ENCODE measurements at regions of chr1 and their contacts with region 1.

Region 1: GRCh38 chr1:40951943-40952743 is 27.4 kb upstream of the CTPS1 start:
- DNase-seq: peak; percentile 64
- ATAC-seq: peak; percentile 41
- H3K4me3 ChIP-seq: no peak overlapping the region
- H3K4me3 Mint-ChIP-seq: no peak overlapping the region
- H3K27ac ChIP-seq: no peak overlapping the region
- H3K27ac Mint-ChIP-seq: no peak overlapping the region
- H3K4me1 ChIP-seq: peaks cover 5 to 6% of the 10 kb centered on the region in 2 donors
- H3K4me1 Mint-ChIP-seq: peaks cover 4% of the 10 kb centered on the region
- H3K27me3 ChIP-seq: peaks cover 0 to 27% (median 11%) of the 10 kb centered on the region in 4 experiments
- H3K27me3 Mint-ChIP-seq: peaks cover 43% of the 10 kb centered on the region
- CTCF ChIP-seq: peak; percentile 85

Region 2: GRCh38 chr1:40592107-40592803 is 359.9 kb before region 1 on chr1:
- CTCF ChIA-PET with region 1: interaction called, 8 read pairs
- POLR2A ChIA-PET with region 1: no interaction called
- intact Hi-C with region 1: loop called (anchors 2 kb)
- DNase-seq: peak; percentile 40
- ATAC-seq: no peak
- H3K4me3 ChIP-seq: no peak overlapping the region
- H3K4me3 Mint-ChIP-seq: no peak overlapping the region
- H3K27ac ChIP-seq: no peak overlapping the region
- H3K27ac Mint-ChIP-seq: no peak overlapping the region
- H3K4me1 ChIP-seq: no peaks in the 10 kb centered on the region
- H3K4me1 Mint-ChIP-seq: peaks cover 4% of the 10 kb centered on the region
- H3K27me3 ChIP-seq: peaks cover 0 to 2% (median 0%) of the 10 kb centered on the region in 4 experiments
- H3K27me3 Mint-ChIP-seq: peaks cover 14% of the 10 kb centered on the region
- CTCF ChIP-seq: peak; percentile 39

Region 3: DNA sequence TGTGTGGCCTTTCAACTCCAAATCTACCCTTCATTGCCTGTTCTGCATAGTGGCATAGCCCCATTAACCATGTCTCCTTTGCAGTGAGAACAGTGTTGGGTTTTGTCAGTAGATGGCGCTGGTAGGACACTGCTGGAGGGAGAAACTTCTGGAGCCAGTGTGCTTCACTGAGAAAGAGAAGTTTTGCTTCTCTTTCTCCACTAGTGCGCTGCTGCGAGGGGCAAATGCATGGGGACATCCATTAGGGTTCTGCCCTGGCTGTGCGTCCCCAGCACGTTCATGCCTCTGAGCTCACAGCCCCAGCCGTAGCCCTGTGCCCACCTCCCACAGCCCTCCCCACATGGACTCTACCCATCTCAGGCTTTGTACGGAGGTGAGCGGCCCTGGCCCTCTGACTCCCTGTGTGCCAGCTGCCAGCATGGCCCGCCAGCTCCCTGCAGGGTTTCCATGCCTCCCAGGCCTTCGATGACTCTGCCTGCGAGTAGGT is 339.8 kb before region 1 on chr1:
- CTCF ChIA-PET with region 1: interaction called, 7 read pairs
- POLR2A ChIA-PET with region 1: no interaction called
- intact Hi-C with region 1: loop called (anchors 1 kb)
- DNase-seq: peak; percentile 81
- ATAC-seq: peak; percentile 91
- H3K4me3 ChIP-seq: no peak overlapping the region
- H3K4me3 Mint-ChIP-seq: no peak overlapping the region
- H3K27ac ChIP-seq: no peak overlapping the region
- H3K27ac Mint-ChIP-seq: no peak overlapping the region
- H3K4me1 ChIP-seq: peaks cover 0 to 2% of the 10 kb centered on the region in 2 donors
- H3K4me1 Mint-ChIP-seq: no peaks in the 10 kb centered on the region
- H3K27me3 ChIP-seq: no peaks in the 10 kb centered on the region
- H3K27me3 Mint-ChIP-seq: peaks cover 3% of the 10 kb centered on the region
- CTCF ChIP-seq: peak; percentile 91

Region 4: GRCh38 chr1:40849801-40850592 is 102.1 kb before region 1 on chr1:
- CTCF ChIA-PET with region 1: interaction called, 12 read pairs
- POLR2A ChIA-PET with region 1: no interaction called
- intact Hi-C with region 1: no loop called
- DNase-seq: peak; percentile 85
- ATAC-seq: peak; percentile 98
- H3K4me3 ChIP-seq: no peak overlapping the region
- H3K4me3 Mint-ChIP-seq: peak overlapping the region; percentile 35
- H3K27ac ChIP-seq: no peak overlapping the region
- H3K27ac Mint-ChIP-seq: no peak overlapping the region
- H3K4me1 ChIP-seq: peaks cover 8% of the 10 kb centered on the region in 2 donors
- H3K4me1 Mint-ChIP-seq: peaks cover 11% of the 10 kb centered on the region
- H3K27me3 ChIP-seq: no peaks in the 10 kb centered on the region
- H3K27me3 Mint-ChIP-seq: peaks cover 5% of the 10 kb centered on the region
- CTCF ChIP-seq: peak; percentile 98

Region 5: DNA sequence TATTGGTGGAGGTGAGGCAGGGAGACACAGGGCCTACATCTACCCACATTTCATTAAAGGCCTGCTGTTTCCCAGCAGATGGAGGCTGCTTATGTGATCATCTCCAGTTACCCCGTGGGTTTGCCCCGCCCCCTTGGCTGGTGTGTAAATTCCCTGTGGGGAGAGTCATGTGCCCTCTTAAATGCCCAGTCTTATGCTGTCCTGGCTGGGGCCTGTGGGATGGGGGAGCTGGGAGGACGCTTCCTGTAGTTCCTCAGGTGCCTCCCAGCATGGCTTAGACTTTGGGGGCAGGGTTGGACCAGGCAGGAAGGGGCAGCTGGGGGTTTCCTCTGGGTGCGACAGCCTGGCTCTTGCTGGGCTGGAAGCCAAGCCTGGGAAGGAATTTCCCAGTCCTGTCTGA is 74.4 kb before region 1 on chr1:
- CTCF ChIA-PET with region 1: no interaction called
- POLR2A ChIA-PET with region 1: no interaction called
- intact Hi-C with region 1: no loop called
- DNase-seq: no peak
- ATAC-seq: no peak
- H3K4me3 ChIP-seq: no peak overlapping the region
- H3K4me3 Mint-ChIP-seq: no peak overlapping the region
- H3K27ac ChIP-seq: no peak overlapping the region
- H3K27ac Mint-ChIP-seq: no peak overlapping the region
- H3K4me1 ChIP-seq: no peaks in the 10 kb centered on the region
- H3K4me1 Mint-ChIP-seq: no peaks in the 10 kb centered on the region
- H3K27me3 ChIP-seq: peaks cover 0 to 23% (median 2%) of the 10 kb centered on the region in 4 experiments
- H3K27me3 Mint-ChIP-seq: peaks cover 26% of the 10 kb centered on the region
- CTCF ChIP-seq: no peak